Naive thymus-derived CD4-positive, alpha-beta T cell (primary cell): ENCODE measurements at regions of chr3 and their contacts with region 1.

Region 1: DNA sequence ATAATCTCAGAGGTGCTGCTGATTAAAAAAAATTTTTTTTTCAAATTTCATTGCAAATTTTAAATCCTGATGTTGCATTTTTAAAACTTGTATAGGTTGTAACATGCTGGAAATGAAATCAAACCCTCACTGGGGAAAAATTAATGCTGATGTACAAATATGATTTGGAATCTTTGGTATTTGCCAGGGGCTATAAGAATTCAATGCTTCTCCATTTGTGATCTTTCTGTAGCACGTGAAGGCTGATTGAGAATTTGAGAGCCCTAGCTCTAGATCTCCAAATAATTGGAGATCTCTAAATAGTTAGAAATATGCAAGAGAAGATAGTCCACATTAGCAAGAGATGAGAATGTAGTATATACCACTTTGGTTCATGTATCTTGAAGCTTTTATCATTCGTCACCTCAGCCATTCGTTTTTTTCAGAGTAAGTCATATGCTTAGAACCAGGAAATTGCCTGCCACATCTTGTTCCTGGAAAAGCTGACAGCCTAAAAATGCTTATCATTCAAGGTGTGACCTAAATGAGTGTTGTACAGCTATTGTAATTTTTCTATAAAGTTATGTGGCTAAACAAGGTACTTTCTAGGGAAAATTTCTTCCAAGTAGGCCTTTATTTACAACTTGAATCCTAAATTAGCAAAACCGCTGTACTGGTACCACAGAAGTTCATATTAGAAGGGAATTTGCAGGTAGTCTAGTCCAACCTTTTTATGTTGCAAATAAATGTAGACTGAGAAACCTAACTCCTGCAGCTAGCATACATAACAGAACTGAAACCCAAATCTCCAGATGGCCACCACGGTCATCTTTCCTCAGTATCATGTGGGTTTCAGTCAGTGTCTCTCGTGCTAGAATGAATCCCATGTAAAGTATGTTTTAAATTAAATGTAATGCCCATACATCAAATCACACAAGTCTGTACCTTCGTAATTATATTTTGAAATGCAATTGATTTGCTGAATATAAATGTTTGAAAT is 48.5 kb downstream of the FNDC3B start:
- DNase-seq: no peak
- ATAC-seq: no peak
- H3K4me3 ChIP-seq: no peak overlapping the region
- H3K4me3 Mint-ChIP-seq: peak overlapping the region in 6 of 10 donors; percentile 22 to 79 (median 32)
- H3K27ac ChIP-seq: no peak overlapping the region
- H3K27ac Mint-ChIP-seq: peak overlapping the region in 5 of 9 donors; percentile 11 to 85 (median 56)
- H3K4me1 ChIP-seq: peaks cover 0 to 13% of the 10 kb centered on the region in 2 donors
- H3K4me1 Mint-ChIP-seq: peaks cover 14 to 58% (median 37%) of the 10 kb centered on the region in 7 donors
- H3K27me3 ChIP-seq: no peaks in the 10 kb centered on the region
- H3K27me3 Mint-ChIP-seq: no peaks in the 10 kb centered on the region

Region 2: GRCh38 chr3:172074586-172074985 is 13.3 kb before region 1 on chr3:
- CTCF ChIA-PET with region 1: no interaction called
- POLR2A ChIA-PET with region 1: no interaction called
- intact Hi-C with region 1: loop called in 1 of 2 experiments (anchors 1 kb)
- DNase-seq: no peak
- ATAC-seq: peak; percentile 74
- H3K4me3 ChIP-seq: no peak overlapping the region
- H3K4me3 Mint-ChIP-seq: no peak overlapping the region
- H3K27ac ChIP-seq: no peak overlapping the region
- H3K27ac Mint-ChIP-seq: no peak overlapping the region
- H3K4me1 ChIP-seq: no peaks in the 10 kb centered on the region
- H3K4me1 Mint-ChIP-seq: peaks cover 4 to 30% (median 21%) of the 10 kb centered on the region in 7 donors
- H3K27me3 ChIP-seq: no peaks in the 10 kb centered on the region
- H3K27me3 Mint-ChIP-seq: no peaks in the 10 kb centered on the region

Region 3: GRCh38 chr3:172129870-172130683 is 42.2 kb after region 1 on chr3:
- CTCF ChIA-PET with region 1: no interaction called
- POLR2A ChIA-PET with region 1: no interaction called
- intact Hi-C with region 1: loop called in 1 of 2 experiments (anchors 5 kb)
- DNase-seq: peak in 4 of 9 donors; percentile 10 to 34 (median 18)
- ATAC-seq: peak; percentile 80
- H3K4me3 ChIP-seq: no peak overlapping the region
- H3K4me3 Mint-ChIP-seq: peak overlapping the region in 4 of 10 donors; percentile 4 to 50 (median 34)
- H3K27ac ChIP-seq: no peak overlapping the region
- H3K27ac Mint-ChIP-seq: peak overlapping the region in 6 of 9 donors; percentile 11 to 84 (median 60)
- H3K4me1 ChIP-seq: peaks cover 0 to 30% of the 10 kb centered on the region in 2 donors
- H3K4me1 Mint-ChIP-seq: peaks cover 26 to 65% (median 51%) of the 10 kb centered on the region in 7 donors
- H3K27me3 ChIP-seq: no peaks in the 10 kb centered on the region
- H3K27me3 Mint-ChIP-seq: no peaks in the 10 kb centered on the region